ENCODE measurements at regions of chr9 and their contacts with region 1.

Region 1: GRCh38 chr9:27990524-27990923 is 417.2 kb upstream of the C9orf72 start:
- DNase-seq: no peak
- ATAC-seq: no peak
- H3K4me3 ChIP-seq: no peak overlapping the region
- H3K27ac ChIP-seq: no peak overlapping the region
- H3K4me1 ChIP-seq: no peaks in the 10 kb centered on the region
- H3K27me3 ChIP-seq: no peaks in the 10 kb centered on the region

Region 2: DNA sequence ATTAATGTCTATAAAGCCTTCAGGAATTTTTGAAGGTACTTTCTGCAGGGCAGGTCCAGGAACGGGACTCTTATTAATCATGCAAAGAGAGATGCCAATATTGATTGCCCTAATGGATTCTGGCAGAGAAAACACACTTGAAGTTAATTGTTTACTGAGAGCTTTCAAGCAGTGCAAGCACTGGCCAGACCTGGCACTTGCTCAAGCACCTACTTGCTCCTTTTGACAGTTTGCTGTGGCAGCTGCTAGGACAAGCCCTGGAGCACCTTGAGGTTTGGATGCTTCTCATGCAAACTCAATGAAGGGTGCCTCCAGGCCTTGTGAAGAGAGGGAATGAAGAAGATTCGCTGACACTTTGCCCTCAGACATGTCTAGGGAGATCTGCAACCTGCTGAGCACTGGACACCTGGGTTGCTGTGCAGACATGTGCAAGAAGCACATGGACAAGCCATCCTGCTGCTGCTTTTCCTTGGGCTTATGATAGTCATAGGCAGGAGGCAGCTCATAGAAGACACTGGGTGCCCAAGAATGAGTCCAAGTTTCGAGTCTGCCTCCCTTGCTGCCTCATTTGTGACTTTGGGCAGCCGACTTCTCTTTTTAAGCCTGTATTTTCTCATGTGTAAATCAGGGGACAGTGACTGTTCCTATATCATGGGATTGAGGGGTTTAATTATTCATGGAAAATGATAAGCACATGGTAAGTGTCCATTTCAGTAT is 604.8 kb before region 1 on chr9:
- intact Hi-C with region 1: no loop called
- DNase-seq: no peak
- ATAC-seq: no peak
- H3K4me3 ChIP-seq: no peak overlapping the region
- H3K27ac ChIP-seq: no peak overlapping the region
- H3K4me1 ChIP-seq: no peaks in the 10 kb centered on the region
- H3K27me3 ChIP-seq: no peaks in the 10 kb centered on the region

Region 3: GRCh38 chr9:28051559-28052503 is 61.3 kb after region 1 on chr9:
- intact Hi-C with region 1: loop called in 1 of 4 experiments (anchors 10 kb)
- DNase-seq: no peak
- ATAC-seq: no peak
- H3K4me3 ChIP-seq: no peak overlapping the region
- H3K27ac ChIP-seq: no peak overlapping the region
- H3K4me1 ChIP-seq: no peaks in the 10 kb centered on the region
- H3K27me3 ChIP-seq: no peaks in the 10 kb centered on the region